ENCODE measurements at regions of chr15 and their contacts with region 1.

Region 1: GRCh38 chr15:47987908-47988532 is 132.8 kb upstream of the SLC24A5 start:
- DNase-seq: peak in 1 of 35 experiments; percentile 45
- ATAC-seq: no peak
- H3K4me3 ChIP-seq: no peak overlapping the region
- H3K4me3 Mint-ChIP-seq: no peak overlapping the region
- H3K27ac ChIP-seq: no peak overlapping the region
- H3K27ac Mint-ChIP-seq: no peak overlapping the region
- H3K4me1 ChIP-seq: no peaks in the 10 kb centered on the region
- H3K4me1 Mint-ChIP-seq: no peaks in the 10 kb centered on the region
- H3K27me3 ChIP-seq: no peaks in the 10 kb centered on the region
- H3K27me3 Mint-ChIP-seq: peaks cover 0 to 3% of the 10 kb centered on the region in 2 donors

Region 2: GRCh38 chr15:47196057-47196456 is 792.0 kb before region 1 on chr15:
- CTCF ChIA-PET with region 1: interaction called in 1 of 2 experiments, 12 read pairs
- POLR2A ChIA-PET with region 1: no interaction called
- DNase-seq: peak in 26 of 35 experiments; percentile 2 to 46 (median 12)
- ATAC-seq: no peak
- H3K4me3 ChIP-seq: no peak overlapping the region
- H3K4me3 Mint-ChIP-seq: no peak overlapping the region
- H3K27ac ChIP-seq: no peak overlapping the region
- H3K27ac Mint-ChIP-seq: no peak overlapping the region
- H3K4me1 ChIP-seq: no peaks in the 10 kb centered on the region
- H3K4me1 Mint-ChIP-seq: no peaks in the 10 kb centered on the region
- H3K27me3 ChIP-seq: no peaks in the 10 kb centered on the region
- H3K27me3 Mint-ChIP-seq: peaks cover 0 to 3% of the 10 kb centered on the region in 2 donors

Region 3: DNA sequence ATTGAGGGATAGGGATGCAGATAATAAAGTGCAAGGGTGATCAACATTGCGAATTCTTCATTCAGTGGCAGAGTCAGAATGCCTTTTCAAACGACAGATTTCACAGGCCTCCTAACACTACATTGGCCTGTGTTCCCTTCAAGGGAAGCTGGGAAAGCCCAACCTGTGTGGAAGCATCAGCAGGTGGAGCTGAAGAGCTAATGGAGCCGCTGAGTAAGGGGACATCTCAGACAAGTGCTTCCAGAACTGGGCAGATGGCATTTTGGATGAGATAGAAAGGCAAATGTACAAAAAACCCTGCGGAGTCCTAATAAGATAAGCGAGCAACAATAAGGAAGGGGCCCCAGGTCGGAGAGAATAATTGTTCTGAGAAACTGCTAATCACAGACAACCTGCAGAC is 124.2 kb after region 1 on chr15:
- CTCF ChIA-PET with region 1: no interaction called
- POLR2A ChIA-PET with region 1: no interaction called
- DNase-seq: peak in 1 of 35 experiments; percentile 7
- ATAC-seq: no peak
- H3K4me3 ChIP-seq: no peak overlapping the region
- H3K4me3 Mint-ChIP-seq: no peak overlapping the region
- H3K27ac ChIP-seq: no peak overlapping the region
- H3K27ac Mint-ChIP-seq: no peak overlapping the region
- H3K4me1 ChIP-seq: no peaks in the 10 kb centered on the region
- H3K4me1 Mint-ChIP-seq: no peaks in the 10 kb centered on the region
- H3K27me3 ChIP-seq: peaks cover 0 to 4% of the 10 kb centered on the region in 2 experiments
- H3K27me3 Mint-ChIP-seq: peaks cover 12 to 20% of the 10 kb centered on the region in 2 donors